Activated CD4-positive, alpha-beta memory T cell treated with anti-CD3 and anti-CD28 coated beads, Interleukin-2, amount 10 ng/mL, durations not matched to agents 7 days and 5 days (primary cell): ENCODE measurements at regions of chr11 and their contacts with region 1.

Region 1: GRCh38 chr11:925496-926321 is at the start of gene AP2A2:
- DNase-seq: peak; percentile 91
- H3K4me3 Mint-ChIP-seq: peak within 1 kb of the TSS; percentile 77
- H3K27ac Mint-ChIP-seq: peak within 1 kb of the TSS; percentile 63
- H3K4me1 Mint-ChIP-seq: peaks cover 31% of the 10 kb centered on the region
- H3K27me3 Mint-ChIP-seq: no peaks in the 10 kb centered on the region
- total RNA-seq, gene AP2A2: 50.5 to 51.1 TPM

Region 2: GRCh38 chr11:910589-911195 is 15.0 kb before region 1 on chr11 and contains the start of gene CHID1:
- CTCF ChIA-PET with region 1: interaction called, 18 read pairs
- POLR2A ChIA-PET with region 1: interaction called, 5 read pairs
- DNase-seq: peak; percentile 88
- H3K4me3 Mint-ChIP-seq: peak within 1 kb of the TSS; percentile 90
- H3K27ac Mint-ChIP-seq: peak within 1 kb of the TSS; percentile 81
- H3K4me1 Mint-ChIP-seq: peaks cover 25% of the 10 kb centered on the region
- H3K27me3 Mint-ChIP-seq: no peaks in the 10 kb centered on the region
- total RNA-seq, gene CHID1: 38.2 to 39.2 TPM